Vagina (tissue), 2 donors: ENCODE measurements at regions of chr17 and their contacts with region 1.

Region 1: DNA sequence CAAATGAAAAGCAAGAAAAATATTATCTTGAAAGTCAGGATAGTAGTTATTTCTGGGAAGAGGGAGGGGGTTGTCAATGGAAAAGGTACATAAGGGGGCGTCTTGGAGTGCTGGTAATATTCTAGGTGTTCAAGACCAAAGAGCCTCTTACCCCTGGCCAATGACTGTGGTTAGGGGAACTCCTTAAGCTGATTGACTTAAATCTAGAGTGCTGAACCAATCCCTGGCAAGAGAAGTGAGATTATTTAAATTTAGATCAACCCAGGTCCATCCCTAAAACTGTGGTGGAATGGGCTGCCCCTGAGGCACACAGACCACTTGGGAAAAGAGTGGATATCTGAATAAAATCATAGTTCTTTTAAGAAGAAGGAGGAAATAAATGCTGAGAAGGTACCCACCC is 174.1 kb downstream of the COPRS start:
- DNase-seq: no peak
- H3K4me3 ChIP-seq: no peak overlapping the region
- H3K27ac ChIP-seq: no peak overlapping the region
- H3K4me1 ChIP-seq: no peaks in the 10 kb centered on the region
- H3K27me3 ChIP-seq: no peaks in the 10 kb centered on the region
- CTCF ChIP-seq: no peak
- POLR2A ChIP-seq: no peak

Region 2: DNA sequence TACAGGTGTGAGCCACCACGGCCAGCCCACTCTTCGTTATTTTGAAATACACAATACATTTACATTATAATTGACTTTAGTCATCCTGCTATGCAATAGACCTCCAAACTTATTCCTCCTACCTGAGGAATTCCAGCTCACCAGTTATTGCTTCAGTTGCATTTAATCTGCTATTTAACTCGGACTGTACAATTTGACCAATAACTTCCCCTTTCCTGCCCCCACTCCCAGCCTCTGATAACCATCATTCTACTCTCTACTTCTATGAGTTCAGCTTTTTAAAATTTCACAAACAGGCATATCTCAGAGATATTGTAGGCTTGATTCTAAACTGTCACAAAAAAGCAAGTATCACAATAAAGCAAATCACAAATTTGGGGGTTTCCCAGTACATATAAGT is 17.1 kb after region 1 on chr17:
- intact Hi-C with region 1: loop called (anchors 2 kb)
- DNase-seq: no peak
- H3K4me3 ChIP-seq: no peak overlapping the region
- H3K27ac ChIP-seq: no peak overlapping the region
- H3K4me1 ChIP-seq: peaks cover 2% of the 10 kb centered on the region
- H3K27me3 ChIP-seq: no peaks in the 10 kb centered on the region
- CTCF ChIP-seq: no peak
- POLR2A ChIP-seq: no peak